ENCODE measurements at regions of chr9 and their contacts with region 1.

Region 1: GRCh38 chr9:133356391-133357091 is at the starts of genes SURF1 and SURF2:
- DNase-seq: peak; percentile 92 to 95
- ATAC-seq: peak; percentile 81 to 90 (median 86)
- H3K4me3 ChIP-seq: peak within 1 kb of the TSS; percentile 72
- H3K27ac ChIP-seq: peak within 1 kb of the TSS; percentile 79
- H3K4me1 ChIP-seq: peaks cover 25% of the 10 kb centered on the region
- H3K27me3 ChIP-seq: no peaks in the 10 kb centered on the region
- CTCF ChIP-seq: no peak
- total RNA-seq, gene SURF1: 27.7 to 54.9 (median 45.5) TPM
- total RNA-seq, gene SURF2: 10.9 to 13.8 (median 13.3) TPM

Region 2: DNA sequence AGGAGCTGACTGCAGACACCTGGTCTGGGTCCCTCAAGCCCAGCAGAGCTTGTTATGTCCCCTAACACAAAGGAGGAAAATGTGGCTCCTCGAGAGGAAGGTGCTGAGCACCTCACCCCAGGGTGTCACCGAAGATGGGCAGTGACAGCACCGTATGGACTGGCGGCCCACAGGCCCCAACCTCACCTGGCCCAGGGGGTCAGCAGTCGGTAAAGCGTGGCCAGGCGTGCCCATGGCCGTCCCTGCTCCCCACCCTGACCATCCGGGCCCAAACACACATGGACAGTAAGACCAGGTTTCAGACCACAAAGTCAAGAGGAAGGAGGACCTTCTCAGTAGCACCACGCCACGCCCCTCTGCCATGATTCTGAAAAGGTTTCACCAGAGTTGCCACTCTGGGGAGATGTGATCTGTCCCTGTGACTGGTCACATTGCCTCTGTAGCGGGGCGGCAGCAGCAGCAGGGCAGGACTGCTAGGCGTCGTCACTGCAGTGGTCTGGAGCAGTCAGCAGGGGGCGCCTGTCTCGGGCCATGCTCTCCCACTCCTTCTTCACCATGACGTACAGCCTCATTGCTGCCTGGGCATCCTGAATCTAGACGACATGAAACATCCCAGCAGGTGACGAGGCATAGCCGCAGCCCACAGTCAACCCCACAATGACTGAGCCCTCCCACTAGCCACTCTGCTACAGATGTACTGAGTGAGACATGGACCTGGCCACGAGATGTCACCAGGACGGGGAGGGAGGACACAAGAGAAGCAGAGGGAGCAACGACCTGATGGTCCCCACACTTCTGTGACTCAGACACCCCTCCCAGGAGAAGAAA is 50.2 kb after region 1 on chr9:
- intact Hi-C with region 1: loop called in 1 of 2 experiments (anchors 5 kb)
- DNase-seq: peak; percentile 74 to 85
- ATAC-seq: peak; percentile 78 to 85 (median 82)
- H3K4me3 ChIP-seq: no peak overlapping the region
- H3K27ac ChIP-seq: peak overlapping the region; percentile 76
- H3K4me1 ChIP-seq: peaks cover 18% of the 10 kb centered on the region
- H3K27me3 ChIP-seq: no peaks in the 10 kb centered on the region
- CTCF ChIP-seq: peak; percentile 83

Region 3: GRCh38 chr9:133459476-133460404 is 103.2 kb after region 1 on chr9 and contains the start of gene CACFD1:
- intact Hi-C with region 1: loop called in 1 of 2 experiments (anchors 10 kb)
- DNase-seq: peak; percentile 97 to 98
- ATAC-seq: peak; percentile 92 to 95 (median 92)
- H3K4me3 ChIP-seq: peak within 1 kb of the TSS; percentile 93
- H3K27ac ChIP-seq: peak within 1 kb of the TSS; percentile 92
- H3K4me1 ChIP-seq: peaks cover 17% of the 10 kb centered on the region
- H3K27me3 ChIP-seq: no peaks in the 10 kb centered on the region
- CTCF ChIP-seq: no peak
- total RNA-seq, gene CACFD1: 2.8 to 9.4 (median 7.2) TPM

Region 4: DNA sequence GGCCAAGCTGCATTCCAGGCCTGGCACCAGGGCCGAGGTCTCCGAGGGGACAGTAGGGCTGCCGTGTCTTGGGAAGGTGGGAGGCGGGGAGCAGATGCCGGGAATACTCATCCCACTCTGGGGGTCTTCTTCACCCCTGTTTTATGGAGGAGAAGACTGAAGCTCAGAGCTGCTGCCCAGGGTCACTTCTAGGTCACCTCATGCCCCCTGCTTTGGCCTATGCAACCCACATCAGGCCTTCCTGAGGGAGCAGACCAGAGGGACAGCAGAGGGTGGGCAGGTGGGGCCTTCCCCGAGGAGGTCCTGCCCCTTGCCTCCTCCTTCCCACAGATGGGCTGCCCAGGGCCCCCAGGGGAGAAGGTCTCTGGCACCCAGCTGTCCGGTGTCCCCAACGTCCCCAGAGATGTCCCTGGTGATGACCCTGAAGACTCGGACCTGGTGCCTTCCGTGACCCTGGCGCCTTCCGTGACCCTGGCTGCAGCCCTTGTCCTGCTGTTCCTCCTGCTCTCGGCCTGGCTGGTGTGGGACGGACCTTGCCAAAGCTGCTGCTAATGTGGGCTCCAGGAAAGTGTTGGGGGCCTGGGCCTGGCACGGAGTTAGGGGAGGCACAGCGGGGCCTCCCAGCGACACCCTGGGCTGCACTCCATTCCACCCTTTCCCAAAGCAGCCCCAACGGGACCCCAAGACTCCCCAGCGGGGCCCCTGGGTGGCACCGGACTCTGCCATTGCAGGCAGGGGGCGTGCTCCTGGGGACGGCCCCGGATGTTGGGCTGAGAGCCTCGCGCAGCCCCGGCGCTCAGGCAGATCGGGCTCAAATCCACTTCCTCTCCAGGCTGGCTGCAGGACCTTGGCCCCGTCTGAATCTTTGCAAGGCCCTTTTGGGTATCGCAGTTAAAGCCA is 129.1 kb after region 1 on chr9:
- intact Hi-C with region 1: loop called in 1 of 2 experiments (anchors 5 kb)
- DNase-seq: peak in 1 of 2 donors; percentile 46
- ATAC-seq: peak in 3 of 4 donors; percentile 7 to 23 (median 20)
- H3K4me3 ChIP-seq: no peak overlapping the region
- H3K27ac ChIP-seq: no peak overlapping the region
- H3K4me1 ChIP-seq: no peaks in the 10 kb centered on the region
- H3K27me3 ChIP-seq: peaks cover 0 to 7% (median 0%) of the 10 kb centered on the region in 3 donors
- CTCF ChIP-seq: no peak